ENCODE measurements at regions of chr20 and their contacts with region 1.

Region 1: DNA sequence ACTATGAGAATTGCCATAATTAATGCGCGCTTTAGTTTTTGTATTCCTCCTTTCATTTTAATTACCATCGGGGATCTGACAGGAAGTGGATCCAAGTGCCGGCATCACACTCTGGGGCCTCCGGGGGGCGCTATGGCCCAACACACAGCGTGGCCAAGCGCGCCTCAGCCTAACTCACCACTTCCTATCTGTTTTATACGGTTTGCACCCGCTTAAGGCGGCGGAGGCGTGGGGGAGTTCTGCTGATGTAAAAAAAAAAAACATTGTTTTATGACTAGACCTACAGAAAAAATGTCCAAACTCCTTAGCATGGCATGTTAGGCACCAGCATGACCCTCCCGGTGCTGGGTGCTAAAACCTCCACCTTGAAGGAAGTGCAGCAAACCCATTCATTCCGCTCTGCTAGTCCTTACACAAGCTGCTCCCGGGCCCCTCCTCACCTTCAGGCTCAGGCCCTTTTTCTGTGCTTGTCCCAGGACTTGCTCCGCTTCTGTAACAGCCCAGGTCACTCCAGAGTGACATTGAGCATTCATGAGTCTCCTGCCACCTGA is 4.5 kb upstream of the EBF4 start:
- DNase-seq: peak; percentile 94
- ATAC-seq: peak; percentile 95
- H3K4me3 Mint-ChIP-seq: no peak overlapping the region
- H3K27ac Mint-ChIP-seq: no peak overlapping the region
- H3K4me1 Mint-ChIP-seq: peaks cover 22% of the 10 kb centered on the region
- H3K27me3 Mint-ChIP-seq: peaks cover 31% of the 10 kb centered on the region
- CTCF ChIP-seq: peak; percentile 94

Region 2: GRCh38 chr20:2671977-2672376 is 16.1 kb before region 1 on chr20:
- CTCF ChIA-PET with region 1: interaction called, 13 read pairs
- POLR2A ChIA-PET with region 1: interaction called, 3 read pairs
- intact Hi-C with region 1: no loop called
- DNase-seq: no peak
- ATAC-seq: peak; percentile 64
- H3K4me3 Mint-ChIP-seq: no peak overlapping the region
- H3K27ac Mint-ChIP-seq: no peak overlapping the region
- H3K4me1 Mint-ChIP-seq: no peaks in the 10 kb centered on the region
- H3K27me3 Mint-ChIP-seq: peaks cover 3% of the 10 kb centered on the region
- CTCF ChIP-seq: no peak

Region 3: DNA sequence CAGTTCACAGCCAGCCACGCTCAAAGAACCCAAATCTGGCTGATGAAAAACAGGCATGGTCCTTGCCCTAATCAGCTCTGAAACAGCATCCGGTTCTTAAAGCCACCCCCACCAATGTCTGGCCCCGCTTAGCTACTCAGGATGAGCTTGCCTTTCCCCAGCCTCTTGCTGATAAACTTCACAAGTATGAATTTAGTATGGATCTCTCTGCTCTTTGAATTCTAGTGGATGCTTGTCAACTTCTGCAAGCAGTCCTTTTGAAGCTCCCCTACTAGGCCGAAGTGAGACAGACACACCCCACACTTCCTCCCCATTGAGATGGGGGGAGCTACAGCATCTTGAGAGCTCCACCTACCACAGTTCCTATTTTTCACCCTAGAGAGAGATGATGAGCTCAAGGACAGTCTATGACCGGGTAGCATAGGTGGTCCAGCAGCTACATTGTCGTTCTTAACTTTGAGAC is 41.2 kb after region 1 on chr20:
- CTCF ChIA-PET with region 1: interaction called, 20 read pairs
- POLR2A ChIA-PET with region 1: interaction called, 4 read pairs
- intact Hi-C with region 1: no loop called
- DNase-seq: peak; percentile 48
- ATAC-seq: peak; percentile 96
- H3K4me3 Mint-ChIP-seq: peak overlapping the region; percentile 33
- H3K27ac Mint-ChIP-seq: peak overlapping the region; percentile 85
- H3K4me1 Mint-ChIP-seq: peaks cover 19% of the 10 kb centered on the region
- H3K27me3 Mint-ChIP-seq: no peaks in the 10 kb centered on the region
- CTCF ChIP-seq: no peak

Region 4: GRCh38 chr20:2859330-2860121 is 171.4 kb after region 1 on chr20:
- CTCF ChIA-PET with region 1: no interaction called
- POLR2A ChIA-PET with region 1: no interaction called
- intact Hi-C with region 1: loop called (anchors 10 kb)
- DNase-seq: no peak
- ATAC-seq: no peak
- H3K4me3 Mint-ChIP-seq: no peak overlapping the region
- H3K27ac Mint-ChIP-seq: no peak overlapping the region
- H3K4me1 Mint-ChIP-seq: peaks cover 4% of the 10 kb centered on the region
- H3K27me3 Mint-ChIP-seq: no peaks in the 10 kb centered on the region
- CTCF ChIP-seq: no peak

Measured in activated CD8-positive, alpha-beta T cell treated with anti-CD3 and anti-CD28 coated beads for 36 hours (primary cell).